Common myeloid progenitor, CD34-positive (primary cell): ENCODE measurements at regions of chr6 and their contacts with region 1.

Region 1: GRCh38 chr6:137866914-137867684 is at the start of gene TNFAIP3:
- DNase-seq: peak; percentile 96 to 98 (median 98)
- H3K4me3 ChIP-seq: peak within 1 kb of the TSS; percentile 76 to 95 (median 87)
- H3K27ac ChIP-seq: peak within 1 kb of the TSS; percentile 85 to 92
- H3K4me1 ChIP-seq: peaks cover 12 to 54% (median 37%) of the 10 kb centered on the region in 4 experiments
- H3K27me3 ChIP-seq: no peaks in the 10 kb centered on the region

Region 2: DNA sequence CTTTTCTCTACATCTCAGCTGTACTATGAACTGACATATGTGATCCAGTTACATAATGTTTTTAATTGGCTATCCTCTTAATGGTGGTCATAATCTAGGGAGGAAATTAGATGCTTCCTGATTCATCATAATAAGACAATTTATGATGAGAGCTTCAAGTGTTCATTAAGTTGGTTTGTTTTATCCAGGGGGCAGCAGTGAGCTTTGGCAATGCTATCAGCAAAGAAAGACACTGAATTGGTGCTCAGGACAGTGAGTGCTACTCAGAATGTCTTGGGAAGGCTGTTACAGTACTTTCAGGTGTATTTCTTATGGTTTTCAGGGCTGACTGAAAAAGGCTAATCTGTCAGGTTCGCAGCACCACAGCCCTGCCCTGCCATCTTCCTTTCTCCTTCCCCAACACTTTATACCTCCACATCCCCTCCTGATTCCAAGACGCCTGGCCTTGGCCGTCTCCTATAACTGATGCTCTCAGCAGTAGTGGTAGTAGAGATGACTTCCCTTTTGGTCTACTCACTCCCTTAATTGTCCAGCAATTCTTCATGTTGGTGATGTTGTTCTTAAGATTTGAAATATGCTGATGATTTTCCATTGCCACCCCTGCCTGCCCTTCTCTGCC is 67.0 kb before region 1 on chr6:
- CTCF ChIA-PET with region 1: interaction called, 16 read pairs
- POLR2A ChIA-PET with region 1: interaction called, 3 read pairs
- DNase-seq: peak; percentile 82 to 90 (median 88)
- H3K4me3 ChIP-seq: no peak overlapping the region
- H3K27ac ChIP-seq: no peak overlapping the region
- H3K4me1 ChIP-seq: peaks cover 0 to 13% (median 7%) of the 10 kb centered on the region in 4 experiments
- H3K27me3 ChIP-seq: no peaks in the 10 kb centered on the region

Region 3: DNA sequence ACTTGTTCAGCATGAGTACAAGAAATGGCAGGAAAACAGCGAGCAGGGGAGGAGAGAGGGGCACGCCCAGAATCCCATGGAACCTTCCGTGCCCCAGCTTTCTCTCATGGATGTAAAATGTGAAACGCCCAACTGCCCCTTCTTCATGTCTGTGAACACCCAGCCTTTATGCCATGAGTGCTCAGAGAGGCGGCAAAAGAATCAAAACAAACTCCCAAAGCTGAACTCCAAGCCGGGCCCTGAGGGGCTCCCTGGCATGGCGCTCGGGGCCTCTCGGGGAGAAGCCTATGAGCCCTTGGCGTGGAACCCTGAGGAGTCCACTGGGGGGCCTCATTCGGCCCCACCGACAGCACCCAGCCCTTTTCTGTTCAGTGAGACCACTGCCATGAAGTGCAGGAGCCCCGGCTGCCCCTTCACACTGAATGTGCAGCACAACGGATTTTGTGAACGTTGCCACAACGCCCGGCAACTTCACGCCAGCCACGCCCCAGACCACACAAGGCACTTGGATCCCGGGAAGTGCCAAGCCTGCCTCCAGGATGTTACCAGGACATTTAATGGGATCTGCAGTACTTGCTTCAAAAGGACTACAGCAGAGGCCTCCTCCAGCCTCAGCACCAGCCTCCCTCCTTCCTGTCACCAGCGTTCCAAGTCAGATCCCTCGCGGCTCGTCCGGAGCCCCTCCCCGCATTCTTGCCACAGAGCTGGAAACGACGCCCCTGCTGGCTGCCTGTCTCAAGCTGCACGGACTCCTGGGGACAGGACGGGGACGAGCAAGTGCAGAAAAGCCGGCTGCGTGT is 11.6 kb after region 1 on chr6:
- CTCF ChIA-PET with region 1: interaction called, 67 read pairs
- POLR2A ChIA-PET with region 1: interaction called, 8 read pairs
- DNase-seq: no peak
- H3K4me3 ChIP-seq: no peak overlapping the region
- H3K27ac ChIP-seq: no peak overlapping the region
- H3K4me1 ChIP-seq: peaks cover 2 to 19% (median 15%) of the 10 kb centered on the region in 4 experiments
- H3K27me3 ChIP-seq: no peaks in the 10 kb centered on the region

Region 4: DNA sequence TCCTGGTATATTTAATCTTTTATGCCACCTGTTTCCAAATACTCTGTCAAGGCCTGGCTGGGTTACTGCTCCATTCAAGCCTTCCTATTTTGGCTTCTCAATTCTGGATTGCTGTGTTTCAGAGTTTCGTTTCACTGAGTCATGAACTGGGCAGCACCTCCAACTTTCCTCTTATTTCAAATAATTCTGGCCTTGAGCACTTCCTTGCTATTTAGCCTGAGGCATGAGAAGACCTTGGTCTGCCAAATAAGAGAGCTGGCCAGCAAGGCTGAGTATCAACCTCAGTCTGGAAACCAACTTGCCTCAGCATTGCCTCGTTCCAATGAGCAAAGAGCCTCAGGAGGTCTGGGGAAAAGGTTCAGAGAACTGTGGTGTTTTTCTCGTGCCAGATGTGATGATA is 66.6 kb after region 1 on chr6:
- CTCF ChIA-PET with region 1: interaction called, 24 read pairs
- POLR2A ChIA-PET with region 1: interaction called, 3 read pairs
- DNase-seq: no peak
- H3K4me3 ChIP-seq: no peak overlapping the region
- H3K27ac ChIP-seq: no peak overlapping the region
- H3K4me1 ChIP-seq: peaks cover 0 to 9% (median 6%) of the 10 kb centered on the region in 4 experiments
- H3K27me3 ChIP-seq: no peaks in the 10 kb centered on the region

Region 5: DNA sequence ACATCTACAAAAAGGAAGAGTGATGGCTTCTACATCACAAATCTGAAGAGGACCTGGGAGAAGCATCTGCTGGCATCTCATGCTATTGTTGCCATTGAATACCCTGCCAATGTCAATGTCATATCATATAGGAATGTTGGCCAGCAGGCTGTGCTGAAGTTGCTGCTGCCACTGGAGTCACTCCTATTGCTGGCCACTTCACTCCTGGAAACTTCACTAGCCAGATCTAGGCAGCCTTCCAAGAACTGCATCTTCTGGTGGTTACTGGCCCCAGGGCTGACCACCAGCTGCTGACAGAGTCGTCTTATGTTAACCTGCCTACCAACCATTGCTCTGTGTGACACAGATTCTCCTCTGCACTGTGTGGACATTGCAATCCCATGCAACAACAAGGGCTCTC is 128.3 kb after region 1 on chr6:
- CTCF ChIA-PET with region 1: no interaction called
- POLR2A ChIA-PET with region 1: no interaction called
- DNase-seq: no peak
- H3K4me3 ChIP-seq: no peak overlapping the region
- H3K27ac ChIP-seq: no peak overlapping the region
- H3K4me1 ChIP-seq: no peaks in the 10 kb centered on the region
- H3K27me3 ChIP-seq: no peaks in the 10 kb centered on the region